ENCODE measurements at regions of chr2 and their contacts with region 1.

Region 1: GRCh38 chr2:209334198-209335017 is 89.4 kb upstream of the MAP2 start:
- DNase-seq: peak; percentile 1
- H3K4me3 Mint-ChIP-seq: no peak overlapping the region
- H3K27ac Mint-ChIP-seq: no peak overlapping the region
- H3K4me1 Mint-ChIP-seq: no peaks in the 10 kb centered on the region
- H3K27me3 Mint-ChIP-seq: peaks cover 2% of the 10 kb centered on the region

Region 2: DNA sequence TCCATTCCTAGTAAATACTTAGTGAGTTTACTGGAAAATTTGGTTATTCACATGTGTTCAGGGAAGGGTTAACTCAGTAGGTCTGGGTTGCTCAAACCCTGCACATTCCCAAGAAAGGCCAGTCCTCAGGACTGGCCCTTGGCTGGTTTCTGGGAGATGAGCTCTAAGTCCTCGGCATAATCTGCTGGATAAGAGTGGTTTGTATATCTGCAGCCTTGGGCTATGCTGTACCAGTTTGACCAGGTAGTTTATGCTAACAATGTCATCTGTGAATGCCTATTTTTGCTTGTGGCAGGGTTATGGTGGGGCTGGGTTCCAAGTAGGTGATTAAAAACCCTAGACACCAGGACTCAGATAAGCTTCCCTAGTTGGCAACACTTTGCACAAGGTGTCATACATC is 935.2 kb before region 1 on chr2:
- intact Hi-C with region 1: loop called (anchors 5 kb)
- DNase-seq: no peak
- H3K4me3 Mint-ChIP-seq: no peak overlapping the region
- H3K27ac Mint-ChIP-seq: no peak overlapping the region
- H3K4me1 Mint-ChIP-seq: peaks cover 5% of the 10 kb centered on the region
- H3K27me3 Mint-ChIP-seq: peaks cover 28% of the 10 kb centered on the region

Region 3: GRCh38 chr2:208638059-208638797 is 696.2 kb before region 1 on chr2:
- intact Hi-C with region 1: no loop called
- DNase-seq: no peak
- H3K4me3 Mint-ChIP-seq: no peak overlapping the region
- H3K27ac Mint-ChIP-seq: no peak overlapping the region
- H3K4me1 Mint-ChIP-seq: no peaks in the 10 kb centered on the region
- H3K27me3 Mint-ChIP-seq: no peaks in the 10 kb centered on the region

Region 4: GRCh38 chr2:209236377-209236776 is 98.0 kb before region 1 on chr2:
- intact Hi-C with region 1: no loop called
- DNase-seq: no peak
- H3K4me3 Mint-ChIP-seq: no peak overlapping the region
- H3K27ac Mint-ChIP-seq: no peak overlapping the region
- H3K4me1 Mint-ChIP-seq: no peaks in the 10 kb centered on the region
- H3K27me3 Mint-ChIP-seq: no peaks in the 10 kb centered on the region

Region 5: DNA sequence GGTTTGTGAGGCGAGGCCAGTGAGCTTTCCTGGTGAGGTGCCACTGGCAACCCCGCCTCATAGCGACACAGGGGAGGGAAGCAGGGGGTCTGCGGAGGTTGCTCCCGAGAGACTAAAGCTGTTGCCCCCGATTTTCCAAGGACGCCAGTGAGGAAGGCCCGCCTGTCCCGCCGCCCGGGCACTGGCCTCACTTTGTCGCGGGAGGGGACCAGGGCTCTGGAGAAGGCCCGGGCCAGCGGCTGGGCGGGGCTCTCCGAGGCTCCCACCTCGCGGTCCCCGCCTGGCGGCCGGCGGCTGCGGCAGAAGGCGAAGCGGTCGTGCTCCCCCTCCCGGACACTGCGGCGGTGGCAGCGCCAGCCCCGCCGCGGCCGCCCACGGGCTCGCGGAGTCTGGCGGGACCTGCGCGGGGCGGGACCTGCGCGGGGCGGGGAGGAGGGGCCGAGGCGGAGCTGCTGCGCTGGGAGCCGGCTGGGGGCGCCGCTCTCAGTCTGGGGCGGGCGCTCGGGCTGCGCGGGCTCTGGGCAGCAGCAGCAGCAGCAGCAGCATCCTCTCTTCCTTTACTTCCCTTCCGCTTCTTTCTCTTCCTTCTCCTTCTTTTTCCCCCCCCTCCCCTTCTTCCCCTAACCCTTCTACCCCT is 89.3 kb after region 1 on chr2 and contains the start of gene MAP2:
- intact Hi-C with region 1: loop called (anchors 5 kb)
- DNase-seq: peak; percentile 63
- H3K4me3 Mint-ChIP-seq: peak within 1 kb of the TSS; percentile 76
- H3K27ac Mint-ChIP-seq: no peak within 1 kb of the TSS
- H3K4me1 Mint-ChIP-seq: peaks cover 14% of the 10 kb centered on the region
- H3K27me3 Mint-ChIP-seq: peaks cover 20% of the 10 kb centered on the region
- total RNA-seq, gene MAP2: not detected in 2 replicates

Region 6: GRCh38 chr2:209577376-209578357 is 243.3 kb after region 1 on chr2:
- intact Hi-C with region 1: loop called (anchors 1 kb)
- DNase-seq: no peak
- H3K4me3 Mint-ChIP-seq: no peak overlapping the region
- H3K27ac Mint-ChIP-seq: no peak overlapping the region
- H3K4me1 Mint-ChIP-seq: no peaks in the 10 kb centered on the region
- H3K27me3 Mint-ChIP-seq: peaks cover 5% of the 10 kb centered on the region

Region 7: DNA sequence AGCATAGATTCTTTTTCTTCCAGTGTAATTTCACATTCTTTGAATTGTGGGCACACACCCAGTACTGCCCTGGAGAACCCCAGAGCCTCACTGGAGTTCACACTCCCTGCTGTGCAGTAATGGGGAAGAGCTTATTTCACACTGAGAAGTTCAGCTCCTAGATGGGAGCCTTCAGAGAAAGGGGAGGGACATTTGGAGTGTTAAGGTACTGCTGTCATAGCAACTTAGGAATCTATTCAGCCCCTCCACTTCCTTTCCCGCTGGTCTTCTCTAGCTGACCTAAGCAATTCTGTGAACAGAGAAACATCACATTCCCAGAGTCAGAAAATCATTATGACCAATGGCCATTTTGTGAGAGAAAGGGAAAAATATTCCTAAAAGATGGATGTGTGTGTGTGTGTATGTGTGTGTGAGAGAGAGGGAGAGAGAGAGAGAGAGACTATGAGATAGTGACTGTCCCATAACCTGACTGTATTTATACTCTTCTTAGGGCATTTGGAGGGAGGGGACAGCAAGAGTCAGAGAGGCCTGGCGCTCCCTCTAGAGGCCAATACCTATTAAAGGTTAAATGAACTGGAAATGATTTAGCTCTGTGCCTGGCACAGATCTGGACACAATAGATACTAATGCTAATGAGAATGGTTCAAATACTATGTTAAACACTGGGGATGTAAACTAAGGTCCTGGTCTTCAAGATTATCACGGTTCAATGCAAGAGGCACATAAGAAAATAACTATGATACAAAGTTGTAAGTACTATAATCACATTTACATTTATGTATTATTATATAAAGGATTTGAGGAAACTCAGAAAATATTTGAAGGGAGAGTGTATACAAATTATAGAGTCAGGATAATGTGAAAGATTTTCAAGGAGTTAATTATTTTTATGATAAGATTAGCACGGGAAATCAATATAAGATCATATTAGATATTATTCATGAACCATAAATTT is 626.5 kb after region 1 on chr2:
- intact Hi-C with region 1: loop called (anchors 1 kb)
- DNase-seq: no peak
- H3K4me3 Mint-ChIP-seq: no peak overlapping the region
- H3K27ac Mint-ChIP-seq: no peak overlapping the region
- H3K4me1 Mint-ChIP-seq: no peaks in the 10 kb centered on the region
- H3K27me3 Mint-ChIP-seq: peaks cover 10% of the 10 kb centered on the region